Pancreas (tissue), 10 donors: ENCODE measurements at regions of chr5 and their contacts with region 1.

Region 1: DNA sequence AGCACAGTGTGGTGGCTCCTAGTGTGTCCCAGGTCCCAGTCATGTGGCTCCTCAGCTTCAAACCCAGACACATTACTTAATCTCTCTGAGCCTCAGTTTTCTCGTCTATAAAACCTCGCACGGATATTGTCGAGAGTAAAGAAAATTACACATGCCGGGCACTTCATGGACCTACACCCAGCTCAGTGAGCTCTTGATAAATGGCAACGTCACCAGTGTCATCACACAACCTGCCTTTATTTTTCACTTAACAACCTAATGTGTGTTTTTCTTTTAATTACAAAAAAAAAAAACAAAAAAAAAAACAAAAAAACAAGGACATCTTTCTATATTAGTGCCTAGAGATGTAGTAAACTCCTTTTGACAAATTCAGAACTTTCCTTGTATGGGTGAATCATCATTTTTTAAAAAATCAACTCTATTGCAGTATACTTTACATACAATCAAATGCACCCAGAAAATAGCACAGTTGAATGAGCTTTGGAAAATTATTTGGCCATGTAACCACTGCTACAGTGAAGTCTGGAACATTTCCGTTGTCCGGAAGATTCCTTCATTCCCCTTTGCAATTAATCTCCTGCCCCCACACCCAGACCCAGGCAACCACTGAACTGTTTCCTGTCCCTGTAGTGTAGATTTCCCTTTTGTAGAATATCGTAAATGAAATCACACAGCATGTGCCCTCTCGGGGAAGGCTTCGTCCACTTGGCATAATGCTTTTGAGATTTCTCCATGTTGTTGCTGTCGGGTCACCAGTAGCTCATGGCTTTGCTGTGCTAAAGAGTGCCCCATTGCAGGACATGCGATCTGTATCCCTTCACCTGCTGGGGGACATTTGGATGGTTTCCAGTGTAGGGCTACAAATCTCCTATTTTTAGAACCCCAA is 100.4 kb upstream of the LARP1 start:
- DNase-seq: no peak
- ATAC-seq: peak in 2 of 4 donors; percentile 2 to 16
- H3K4me3 ChIP-seq: peak overlapping the region in 1 of 4 donors; percentile 11
- H3K27ac ChIP-seq: peak overlapping the region; percentile 31 to 57 (median 43)
- H3K4me1 ChIP-seq: peaks cover 7 to 20% (median 16%) of the 10 kb centered on the region in 3 donors
- H3K27me3 ChIP-seq: no peaks in the 10 kb centered on the region
- CTCF ChIP-seq: no peak

Region 2: GRCh38 chr5:154761046-154761736 is 106.5 kb after region 1 on chr5:
- intact Hi-C with region 1: loop called in 1 of 3 experiments (anchors 10 kb)
- DNase-seq: no peak
- ATAC-seq: no peak
- H3K4me3 ChIP-seq: no peak overlapping the region
- H3K27ac ChIP-seq: peak overlapping the region in 1 of 4 donors; percentile 28
- H3K4me1 ChIP-seq: peaks cover 28 to 57% (median 50%) of the 10 kb centered on the region in 3 donors
- H3K27me3 ChIP-seq: no peaks in the 10 kb centered on the region
- CTCF ChIP-seq: no peak

Region 3: GRCh38 chr5:154811653-154812365 is 157.1 kb after region 1 on chr5:
- intact Hi-C with region 1: loop called in 2 of 3 experiments (anchors 5 kb)
- DNase-seq: peak in 4 of 6 donors; percentile 41 to 72 (median 58)
- ATAC-seq: peak; percentile 68 to 91 (median 86)
- H3K4me3 ChIP-seq: no peak overlapping the region
- H3K27ac ChIP-seq: no peak overlapping the region
- H3K4me1 ChIP-seq: no peaks in the 10 kb centered on the region
- H3K27me3 ChIP-seq: no peaks in the 10 kb centered on the region
- CTCF ChIP-seq: peak; percentile 62 to 75 (median 67)